ENCODE measurements at regions of chr6 and their contacts with region 1.

Region 1: DNA sequence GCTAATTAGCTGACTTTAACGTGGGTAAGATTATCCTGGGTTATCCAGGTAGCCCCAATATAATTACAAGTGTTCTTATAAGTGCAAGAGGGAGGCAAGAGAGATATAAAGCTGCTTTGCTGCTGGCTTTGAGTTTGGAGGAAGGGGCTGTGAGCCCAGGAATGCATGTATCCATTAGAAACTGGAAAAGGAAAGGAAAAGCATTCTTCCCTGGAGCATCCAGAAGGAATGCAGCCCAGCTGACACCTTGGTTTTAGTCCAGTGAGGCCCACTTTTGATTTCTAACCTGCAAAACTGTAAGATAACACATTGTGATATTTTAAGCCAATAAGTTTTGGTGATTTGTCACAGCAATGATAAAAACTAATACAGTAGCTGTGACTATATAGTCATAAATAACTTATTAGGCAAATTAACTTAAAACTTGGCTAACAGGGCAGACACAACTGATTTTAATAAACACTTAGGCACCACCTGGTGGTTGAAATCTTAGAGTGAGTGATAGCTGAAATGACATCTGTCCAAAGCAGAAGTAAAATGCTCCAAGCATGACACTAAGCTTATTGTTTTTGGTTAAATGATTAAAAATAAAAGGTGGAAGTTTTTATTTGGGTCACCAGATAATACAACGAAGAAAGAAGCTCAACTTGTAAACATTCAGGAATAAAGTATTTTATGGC is 35.6 kb downstream of the ADGRF4 start:
- DNase-seq: peak; percentile 67
- ATAC-seq: no peak
- H3K4me3 ChIP-seq: no peak overlapping the region
- H3K27ac ChIP-seq: no peak overlapping the region
- H3K4me1 ChIP-seq: peaks cover 61% of the 10 kb centered on the region
- H3K27me3 ChIP-seq: no peaks in the 10 kb centered on the region
- CTCF ChIP-seq: peak; percentile 79

Region 2: DNA sequence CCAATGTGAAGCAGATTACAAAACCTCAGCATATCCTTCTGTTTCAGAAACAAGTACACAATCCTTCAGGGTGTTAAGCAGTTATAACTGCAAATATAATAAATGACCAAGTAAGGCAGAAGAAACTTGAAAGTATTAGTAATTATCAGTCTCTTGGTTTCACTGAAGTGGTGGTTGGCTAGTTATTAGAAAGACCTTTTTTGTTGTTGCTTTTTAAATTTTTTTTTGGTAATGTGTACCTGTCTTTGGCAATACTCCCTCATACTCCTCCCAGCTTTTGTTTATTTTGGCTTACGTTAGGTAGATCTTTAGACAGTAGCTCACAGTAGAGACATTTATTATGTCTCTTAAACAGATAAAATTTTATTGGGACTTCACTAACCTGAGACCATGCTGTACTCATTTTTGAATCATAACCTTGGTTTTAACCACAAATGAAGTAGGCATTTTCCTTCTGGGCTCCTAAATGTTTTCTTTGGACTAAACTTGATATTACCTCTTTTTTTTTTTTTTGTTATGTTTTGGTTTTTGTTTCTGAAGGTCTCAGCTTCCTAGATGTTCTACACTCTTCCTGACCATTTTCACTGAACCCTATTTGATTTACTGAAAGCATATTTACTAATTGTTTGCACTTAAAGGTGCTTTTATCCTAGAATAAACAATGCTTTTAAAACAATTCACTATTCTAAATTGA is 250.0 kb before region 1 on chr6:
- CTCF ChIA-PET with region 1: no interaction called
- POLR2A ChIA-PET with region 1: no interaction called
- intact Hi-C with region 1: loop called (anchors 5 kb)
- DNase-seq: peak; percentile 90
- ATAC-seq: peak; percentile 92
- H3K4me3 ChIP-seq: peak overlapping the region; percentile 45
- H3K27ac ChIP-seq: peak overlapping the region; percentile 75
- H3K4me1 ChIP-seq: peaks cover 49% of the 10 kb centered on the region
- H3K27me3 ChIP-seq: no peaks in the 10 kb centered on the region
- CTCF ChIP-seq: no peak

Region 3: GRCh38 chr6:47646567-47647088 is 87.4 kb before region 1 on chr6:
- CTCF ChIA-PET with region 1: no interaction called
- POLR2A ChIA-PET with region 1: no interaction called
- intact Hi-C with region 1: loop called (anchors 1 kb)
- DNase-seq: peak; percentile 41
- ATAC-seq: no peak
- H3K4me3 ChIP-seq: no peak overlapping the region
- H3K27ac ChIP-seq: no peak overlapping the region
- H3K4me1 ChIP-seq: peaks cover 16% of the 10 kb centered on the region
- H3K27me3 ChIP-seq: no peaks in the 10 kb centered on the region
- CTCF ChIP-seq: peak; percentile 48; the same call in 1 of the 2 replicates

Region 4: DNA sequence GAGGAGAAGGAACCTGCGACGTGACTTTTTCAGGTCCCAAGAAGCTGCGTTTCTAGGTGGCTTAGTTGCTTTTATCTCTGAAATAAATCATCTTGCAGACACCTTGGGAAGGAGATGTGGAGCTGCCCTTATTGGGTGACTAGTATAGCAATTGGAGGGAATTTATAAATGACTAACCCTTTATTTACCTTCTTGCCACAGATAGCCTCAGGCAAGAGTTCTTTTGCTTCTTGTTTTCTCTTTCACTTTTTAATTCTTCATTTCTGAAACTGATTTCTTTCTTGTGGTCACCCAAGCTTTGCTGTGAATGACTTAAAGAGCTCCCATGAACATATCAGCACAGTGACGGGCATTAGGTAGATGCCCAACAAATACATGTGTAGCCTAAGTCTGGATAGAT is 32.7 kb before region 1 on chr6:
- CTCF ChIA-PET with region 1: no interaction called
- POLR2A ChIA-PET with region 1: no interaction called
- intact Hi-C with region 1: loop called (anchors 1 kb)
- DNase-seq: peak; percentile 90
- ATAC-seq: peak; percentile 54
- H3K4me3 ChIP-seq: peak overlapping the region; percentile 31; the same call in 1 of the 2 replicates
- H3K27ac ChIP-seq: peak overlapping the region; percentile 95
- H3K4me1 ChIP-seq: peaks cover 50% of the 10 kb centered on the region
- H3K27me3 ChIP-seq: no peaks in the 10 kb centered on the region
- CTCF ChIP-seq: no peak

Region 5: GRCh38 chr6:47944846-47945245 is 210.8 kb after region 1 on chr6:
- CTCF ChIA-PET with region 1: no interaction called
- POLR2A ChIA-PET with region 1: no interaction called
- intact Hi-C with region 1: no loop called
- DNase-seq: no peak
- ATAC-seq: no peak
- H3K4me3 ChIP-seq: no peak overlapping the region
- H3K27ac ChIP-seq: no peak overlapping the region
- H3K4me1 ChIP-seq: no peaks in the 10 kb centered on the region
- H3K27me3 ChIP-seq: no peaks in the 10 kb centered on the region
- CTCF ChIP-seq: no peak

Region 6: GRCh38 chr6:48641544-48641943 is 907.5 kb after region 1 on chr6:
- CTCF ChIA-PET with region 1: interaction called, 10 read pairs
- POLR2A ChIA-PET with region 1: no interaction called
- intact Hi-C with region 1: no loop called
- DNase-seq: peak; percentile 78
- ATAC-seq: peak; percentile 56
- H3K4me3 ChIP-seq: no peak overlapping the region
- H3K27ac ChIP-seq: no peak overlapping the region
- H3K4me1 ChIP-seq: peaks cover 5% of the 10 kb centered on the region; the same call in 1 of the 2 replicates
- H3K27me3 ChIP-seq: no peaks in the 10 kb centered on the region
- CTCF ChIP-seq: no peak